ENCODE measurements at regions of chr13 and their contacts with region 1.

Region 1: GRCh38 chr13:26985285-26985878 is 186.2 kb downstream of the USP12 start:
- DNase-seq: peak; percentile 72
- H3K27ac ChIP-seq: no peak overlapping the region
- CTCF ChIP-seq: peak; percentile 63

Region 2: DNA sequence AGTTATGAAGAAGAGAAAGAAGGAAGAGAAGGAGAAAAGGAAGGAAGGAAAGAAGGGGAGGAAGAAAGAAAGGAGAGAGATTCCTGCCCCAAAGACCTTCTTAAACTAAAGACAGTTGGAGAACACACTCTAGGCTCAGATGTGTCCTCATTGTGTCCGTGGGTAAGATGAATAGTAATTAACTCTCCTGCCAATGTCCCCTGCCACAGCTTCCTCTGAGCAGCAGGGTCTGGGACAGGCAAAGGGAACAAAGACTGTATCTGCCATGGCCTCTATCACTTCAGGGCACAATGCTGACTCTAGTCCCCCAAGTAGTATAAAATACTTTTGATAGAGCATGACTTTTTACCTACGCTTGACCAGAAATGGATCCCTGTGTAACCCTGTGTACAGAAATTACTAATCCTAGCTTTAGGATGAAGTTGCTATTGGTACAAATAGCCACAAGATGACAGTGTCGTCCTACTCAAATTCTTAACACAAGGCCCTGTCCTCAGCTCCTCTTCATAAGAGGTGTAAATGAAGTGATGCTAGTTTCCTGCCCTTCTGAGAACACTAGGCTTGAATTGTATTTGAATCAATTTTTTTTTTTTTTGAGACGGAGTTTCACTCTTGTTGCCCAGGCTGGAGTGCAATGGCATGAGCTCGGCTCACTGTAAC is 38.6 kb before region 1 on chr13:
- CTCF ChIA-PET with region 1: interaction called, 16 read pairs
- POLR2A ChIA-PET with region 1: no interaction called
- DNase-seq: peak; percentile 49
- H3K27ac ChIP-seq: no peak overlapping the region
- CTCF ChIP-seq: peak; percentile 74

Region 3: DNA sequence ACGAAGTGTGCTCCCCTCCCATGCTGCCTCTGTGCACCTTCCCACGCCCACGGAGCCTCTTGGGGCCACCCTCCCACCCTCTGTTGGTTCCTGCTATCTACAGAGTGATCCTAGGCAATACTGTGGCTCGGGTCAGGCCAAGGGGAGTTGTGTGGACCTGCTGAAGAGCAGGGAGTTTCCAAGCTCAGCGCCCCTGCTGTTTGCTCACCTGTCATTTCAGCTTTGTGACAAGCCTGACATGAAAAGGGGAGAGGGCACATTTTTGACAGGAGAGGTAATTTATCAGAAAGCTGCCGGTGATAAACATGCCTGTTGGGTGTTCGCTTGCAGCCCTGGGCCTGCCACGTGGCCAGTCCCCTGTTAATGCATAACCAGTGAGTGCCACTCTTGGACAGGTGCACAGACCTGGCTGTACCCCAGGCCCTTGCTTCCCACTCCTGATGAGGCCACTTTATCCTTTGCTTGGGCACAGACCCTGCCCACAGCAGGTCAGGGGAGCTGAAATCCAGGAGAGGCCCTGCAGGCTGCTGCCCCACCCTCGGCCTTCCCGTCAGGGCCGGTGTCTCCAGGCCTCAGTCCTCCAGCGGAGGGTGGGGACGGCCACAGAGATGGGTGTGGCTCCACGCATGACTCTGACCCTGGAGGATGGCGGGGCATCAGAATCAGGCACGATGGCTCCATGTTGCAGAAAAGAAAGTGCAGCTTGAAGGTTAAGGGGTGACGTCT is 23.3 kb before region 1 on chr13:
- CTCF ChIA-PET with region 1: no interaction called
- POLR2A ChIA-PET with region 1: no interaction called
- DNase-seq: no peak
- H3K27ac ChIP-seq: no peak overlapping the region
- CTCF ChIP-seq: no peak

Region 4: DNA sequence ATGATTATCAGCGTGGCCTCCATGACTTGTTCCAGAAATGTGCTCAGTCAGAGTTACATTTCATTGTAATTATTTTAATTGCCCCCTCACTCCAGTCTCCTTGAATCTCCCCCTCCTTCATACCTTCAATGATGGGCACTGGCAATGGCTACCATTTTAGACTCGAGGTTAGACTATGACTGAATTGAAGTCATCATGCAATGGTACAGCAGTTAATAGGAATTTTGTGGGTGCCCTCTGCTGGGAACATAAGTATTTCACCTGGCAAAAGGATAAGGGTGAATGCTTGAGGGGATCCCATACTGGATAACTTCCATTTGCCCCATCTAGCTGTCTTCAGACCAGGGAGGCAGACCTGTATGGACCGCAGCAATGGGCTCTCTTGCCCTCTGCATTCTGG is 218.5 kb after region 1 on chr13:
- CTCF ChIA-PET with region 1: interaction called, 11 read pairs
- POLR2A ChIA-PET with region 1: no interaction called
- DNase-seq: no peak
- H3K27ac ChIP-seq: no peak overlapping the region
- CTCF ChIP-seq: no peak; the same call in 1 of the 2 replicates

Measured in RWPE1 (cell line).